T-cell (primary cell): ENCODE measurements at regions of chr2 and their contacts with region 1.

Region 1: GRCh38 chr2:237085248-237086221 is at the start of gene COPS8:
- DNase-seq: peak; percentile 81 to 94 (median 87)
- ATAC-seq: peak; percentile 99 to 100 (median 99)
- H3K4me3 ChIP-seq: peak within 1 kb of the TSS; percentile 81 to 95
- H3K4me3 Mint-ChIP-seq: peak within 1 kb of the TSS; percentile 97 to 99 (median 98)
- H3K27ac ChIP-seq: peak within 1 kb of the TSS; percentile 75
- H3K27ac Mint-ChIP-seq: peak within 1 kb of the TSS; percentile 96 to 99
- H3K4me1 ChIP-seq: peaks cover 7 to 12% of the 10 kb centered on the region in 2 experiments
- H3K4me1 Mint-ChIP-seq: peaks cover 26 to 46% (median 37%) of the 10 kb centered on the region in 3 donors
- H3K27me3 ChIP-seq: no peaks in the 10 kb centered on the region
- H3K27me3 Mint-ChIP-seq: no peaks in the 10 kb centered on the region
- total RNA-seq, gene COPS8: 27.6 to 49.4 (median 30.2) TPM

Region 2: GRCh38 chr2:237074211-237074993 is 11.1 kb before region 1 on chr2:
- CTCF ChIA-PET with region 1: interaction called, 3 to 11 read pairs
- POLR2A ChIA-PET with region 1: no interaction called
- DNase-seq: no peak
- ATAC-seq: no peak
- H3K4me3 ChIP-seq: no peak overlapping the region
- H3K4me3 Mint-ChIP-seq: no peak overlapping the region
- H3K27ac ChIP-seq: no peak overlapping the region
- H3K27ac Mint-ChIP-seq: no peak overlapping the region
- H3K4me1 ChIP-seq: no peaks in the 10 kb centered on the region
- H3K4me1 Mint-ChIP-seq: no peaks in the 10 kb centered on the region
- H3K27me3 ChIP-seq: peaks cover 0 to 8% of the 10 kb centered on the region in 2 experiments
- H3K27me3 Mint-ChIP-seq: no peaks in the 10 kb centered on the region